Naive thymus-derived CD4-positive, alpha-beta T cell (primary cell): ENCODE measurements at regions of chr10 and their contacts with region 1.

Region 1: DNA sequence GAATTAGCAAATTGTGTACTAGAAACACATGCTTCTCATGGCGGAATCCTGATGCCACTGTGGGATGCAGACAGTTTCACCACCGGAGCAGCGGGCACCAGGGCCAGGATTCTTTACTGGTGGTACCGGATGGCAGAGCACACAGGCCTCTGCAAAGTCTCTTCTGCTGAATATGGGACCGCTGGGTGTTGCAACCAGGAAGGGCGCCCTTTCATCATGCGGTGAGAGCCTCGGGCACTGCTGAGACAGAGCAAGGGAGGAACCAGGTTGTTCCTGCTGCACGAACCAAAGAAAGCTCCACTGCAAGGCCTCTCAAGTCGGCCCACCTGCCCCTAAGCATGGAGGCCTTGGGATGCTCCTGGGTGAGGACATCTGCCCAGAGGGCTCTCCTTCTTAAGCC is 57.0 kb upstream of the NMT2 start:
- DNase-seq: no peak
- ATAC-seq: no peak
- H3K4me3 ChIP-seq: no peak overlapping the region
- H3K4me3 Mint-ChIP-seq: no peak overlapping the region
- H3K27ac ChIP-seq: no peak overlapping the region
- H3K27ac Mint-ChIP-seq: no peak overlapping the region
- H3K4me1 ChIP-seq: no peaks in the 10 kb centered on the region
- H3K4me1 Mint-ChIP-seq: peaks cover 0 to 11% (median 9%) of the 10 kb centered on the region in 7 donors
- H3K27me3 ChIP-seq: no peaks in the 10 kb centered on the region
- H3K27me3 Mint-ChIP-seq: peaks cover 0 to 2% (median 0%) of the 10 kb centered on the region in 5 donors

Region 2: DNA sequence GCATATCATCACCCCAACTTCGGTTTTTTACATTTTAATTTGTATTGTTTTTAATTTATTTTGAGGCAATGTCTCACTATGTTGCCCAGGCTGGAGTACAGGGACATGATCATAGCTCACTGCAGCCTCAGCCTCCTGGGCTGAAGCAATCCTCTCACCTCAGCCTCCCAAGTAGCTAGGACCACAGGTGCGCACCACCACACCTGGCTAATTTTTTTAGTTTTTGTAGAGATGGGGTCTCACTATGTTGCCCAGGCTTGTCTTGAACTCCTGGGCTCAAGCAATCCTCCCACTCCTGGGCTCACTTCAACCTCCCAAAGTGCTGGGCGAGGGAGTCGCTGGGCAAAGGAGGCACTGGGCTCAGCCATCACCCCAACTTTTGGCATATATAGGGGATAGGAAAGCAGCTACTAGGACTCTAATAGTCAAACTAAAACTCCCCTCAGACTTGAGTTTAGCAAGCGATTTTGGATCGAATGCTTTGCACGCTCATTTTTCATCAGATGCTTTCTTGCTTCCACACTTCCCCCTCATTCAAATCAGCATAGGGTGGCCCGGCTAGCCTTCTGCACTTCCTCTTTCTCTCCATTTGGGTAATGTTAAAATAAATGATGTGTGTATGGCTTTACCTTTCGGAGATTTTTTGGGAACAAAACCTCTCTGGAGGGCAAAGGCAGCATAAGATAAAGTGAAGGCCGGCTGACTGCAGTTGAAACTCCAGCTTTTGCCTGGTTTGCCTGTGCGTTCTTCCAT is 36.2 kb before region 1 on chr10:
- CTCF ChIA-PET with region 1: no interaction called
- POLR2A ChIA-PET with region 1: no interaction called
- intact Hi-C with region 1: no loop called
- DNase-seq: no peak
- ATAC-seq: peak; percentile 55
- H3K4me3 ChIP-seq: no peak overlapping the region
- H3K4me3 Mint-ChIP-seq: peak overlapping the region in 9 of 10 donors; percentile 39 to 79 (median 66)
- H3K27ac ChIP-seq: no peak overlapping the region
- H3K27ac Mint-ChIP-seq: peak overlapping the region; percentile 59 to 94 (median 88)
- H3K4me1 ChIP-seq: peaks cover 10 to 48% of the 10 kb centered on the region in 2 donors
- H3K4me1 Mint-ChIP-seq: peaks cover 22 to 73% (median 60%) of the 10 kb centered on the region in 7 donors
- H3K27me3 ChIP-seq: no peaks in the 10 kb centered on the region
- H3K27me3 Mint-ChIP-seq: no peaks in the 10 kb centered on the region

Region 3: GRCh38 chr10:15262036-15262713 is 36.7 kb after region 1 on chr10:
- CTCF ChIA-PET with region 1: no interaction called
- POLR2A ChIA-PET with region 1: interaction called, 12 read pairs
- intact Hi-C with region 1: no loop called
- DNase-seq: peak in 1 of 9 donors; percentile 10
- ATAC-seq: peak; percentile 22
- H3K4me3 ChIP-seq: no peak overlapping the region
- H3K4me3 Mint-ChIP-seq: no peak overlapping the region
- H3K27ac ChIP-seq: no peak overlapping the region
- H3K27ac Mint-ChIP-seq: no peak overlapping the region
- H3K4me1 ChIP-seq: no peaks in the 10 kb centered on the region
- H3K4me1 Mint-ChIP-seq: no peaks in the 10 kb centered on the region
- H3K27me3 ChIP-seq: no peaks in the 10 kb centered on the region
- H3K27me3 Mint-ChIP-seq: no peaks in the 10 kb centered on the region